ENCODE measurements at regions of chr5 and their contacts with region 1.

Region 1: GRCh38 chr5:121424966-121425365 is 426.7 kb upstream of the FTMT start:
- DNase-seq: no peak
- H3K27ac ChIP-seq: no peak overlapping the region
- CTCF ChIP-seq: no peak

Region 2: GRCh38 chr5:121841892-121842291 is 416.9 kb after region 1 on chr5:
- CTCF ChIA-PET with region 1: interaction called, 14 read pairs
- POLR2A ChIA-PET with region 1: no interaction called
- DNase-seq: no peak
- H3K27ac ChIP-seq: no peak overlapping the region
- CTCF ChIP-seq: no peak